Activated T-helper 2 cell treated with anti-CD3 and anti-CD28 coated beads, Interferon-gamma antibody, Interleukin-2, Interleukin-4, amounts not matched to agents 10 μg/mL and 5 μg/mL and 100 μg/mL, durations not matched to agents 14 hours and 24 hours and 36 hours (primary cell): ENCODE measurements at regions of chr2 and their contacts with region 1.

Region 1: GRCh38 chr2:190534310-190535120 is at the start of gene NEMP2:
- DNase-seq: peak; percentile 84
- H3K4me3 Mint-ChIP-seq: peak within 1 kb of the TSS; percentile 95
- H3K27ac Mint-ChIP-seq: peak within 1 kb of the TSS; percentile 98
- H3K4me1 Mint-ChIP-seq: peaks cover 48% of the 10 kb centered on the region
- H3K27me3 Mint-ChIP-seq: no peaks in the 10 kb centered on the region
- total RNA-seq, gene NEMP2: 15.2 and 15.5 TPM in 2 replicates

Region 2: DNA sequence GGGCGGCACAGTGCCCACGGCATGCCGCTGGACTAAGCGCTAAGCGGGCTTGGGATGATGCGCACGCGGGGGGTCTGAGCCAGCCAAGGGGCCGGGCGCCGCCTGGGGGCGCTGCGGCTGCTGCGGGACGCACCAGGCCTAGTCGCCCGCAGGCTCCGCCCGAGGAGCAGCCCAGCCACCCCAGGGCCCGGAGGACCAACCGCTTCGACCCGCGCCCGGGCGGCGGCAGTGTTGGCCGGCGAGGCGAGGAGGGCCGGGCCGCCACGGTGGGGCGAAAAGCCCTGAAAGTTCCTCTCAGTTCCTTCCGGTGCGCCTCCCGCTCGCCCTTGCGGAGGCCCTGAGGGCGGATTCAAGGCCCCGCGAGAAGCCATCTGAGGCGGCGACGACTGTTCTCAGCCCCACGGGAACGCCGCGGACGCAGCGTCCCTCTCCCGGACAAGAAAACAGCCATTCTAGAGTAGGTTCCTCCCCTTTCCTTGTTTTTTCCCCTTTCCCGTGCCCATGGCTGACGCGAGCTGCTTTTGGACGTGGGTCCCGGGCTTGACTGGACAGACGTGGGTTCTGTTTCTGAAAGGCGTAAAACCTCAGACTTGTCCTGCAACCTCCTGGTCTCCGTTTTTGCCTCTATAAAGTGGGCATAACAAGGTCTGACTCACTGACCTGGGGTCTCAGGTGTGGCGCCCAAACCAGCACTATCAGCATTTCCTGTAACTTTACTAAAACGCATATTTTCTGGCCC is 860.0 kb before region 1 on chr2 and contains the start of gene ANKAR:
- intact Hi-C with region 1: loop called (anchors 10 kb)
- DNase-seq: peak; percentile 73
- H3K4me3 Mint-ChIP-seq: peak within 1 kb of the TSS; percentile 88
- H3K27ac Mint-ChIP-seq: peak within 1 kb of the TSS; percentile 95
- H3K4me1 Mint-ChIP-seq: peaks cover 22% of the 10 kb centered on the region
- H3K27me3 Mint-ChIP-seq: no peaks in the 10 kb centered on the region
- total RNA-seq, gene ANKAR: 4.0 and 4.1 TPM in 2 replicates

Region 3: DNA sequence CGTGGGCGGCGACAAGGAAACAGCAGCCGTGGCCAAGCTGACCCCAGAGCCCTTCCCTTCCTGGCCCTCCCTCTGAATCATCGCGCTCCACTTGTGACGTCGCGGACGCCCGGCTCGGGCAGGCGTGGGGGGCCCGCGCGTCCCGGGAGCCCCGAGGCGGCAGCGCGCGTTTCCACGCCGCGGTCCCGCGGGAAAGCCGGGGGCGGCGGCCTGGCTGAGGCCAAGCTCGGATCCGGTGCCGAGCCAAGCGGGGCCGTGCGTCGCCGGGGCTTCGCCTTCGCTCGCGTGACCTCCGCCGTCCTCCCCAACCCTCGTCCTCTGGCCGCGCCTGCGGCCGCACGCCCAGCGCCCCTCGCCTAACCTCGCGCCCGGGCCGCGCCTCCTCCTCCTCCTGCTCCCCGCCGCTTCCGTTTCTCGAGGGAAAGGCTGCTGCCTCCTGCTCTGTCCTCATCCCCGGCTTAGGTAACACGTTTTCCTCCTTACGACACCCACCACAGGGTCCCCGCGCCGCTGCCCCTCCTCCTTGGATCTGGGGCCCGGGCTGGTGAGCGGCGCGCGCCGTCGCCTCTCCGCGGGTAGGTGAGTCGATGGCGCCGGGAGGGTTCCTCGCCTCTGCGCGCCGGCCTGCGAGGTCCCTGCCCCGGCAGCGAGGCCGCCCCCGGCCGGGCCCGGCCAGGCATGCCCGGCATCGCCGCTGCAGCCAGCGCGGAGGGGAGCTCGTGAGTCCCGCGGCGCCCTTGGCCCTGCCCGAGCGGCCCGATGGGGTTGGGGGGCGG is 190.8 kb before region 1 on chr2 and contains the start of gene INPP1:
- intact Hi-C with region 1: loop called (anchors 2 kb)
- DNase-seq: peak; percentile 30
- H3K4me3 Mint-ChIP-seq: peak within 1 kb of the TSS; percentile 88
- H3K27ac Mint-ChIP-seq: peak within 1 kb of the TSS; percentile 88
- H3K4me1 Mint-ChIP-seq: peaks cover 18% of the 10 kb centered on the region
- H3K27me3 Mint-ChIP-seq: peaks cover 6% of the 10 kb centered on the region
- total RNA-seq, gene INPP1: 12.8 and 13.6 TPM in 2 replicates

Region 4: GRCh38 chr2:190519975-190520767 is 14.3 kb before region 1 on chr2:
- intact Hi-C with region 1: loop called (anchors 2 kb)
- DNase-seq: no peak
- H3K4me3 Mint-ChIP-seq: peak overlapping the region; percentile 15
- H3K27ac Mint-ChIP-seq: peak overlapping the region; percentile 78
- H3K4me1 Mint-ChIP-seq: peaks cover 58% of the 10 kb centered on the region
- H3K27me3 Mint-ChIP-seq: no peaks in the 10 kb centered on the region

Region 5: DNA sequence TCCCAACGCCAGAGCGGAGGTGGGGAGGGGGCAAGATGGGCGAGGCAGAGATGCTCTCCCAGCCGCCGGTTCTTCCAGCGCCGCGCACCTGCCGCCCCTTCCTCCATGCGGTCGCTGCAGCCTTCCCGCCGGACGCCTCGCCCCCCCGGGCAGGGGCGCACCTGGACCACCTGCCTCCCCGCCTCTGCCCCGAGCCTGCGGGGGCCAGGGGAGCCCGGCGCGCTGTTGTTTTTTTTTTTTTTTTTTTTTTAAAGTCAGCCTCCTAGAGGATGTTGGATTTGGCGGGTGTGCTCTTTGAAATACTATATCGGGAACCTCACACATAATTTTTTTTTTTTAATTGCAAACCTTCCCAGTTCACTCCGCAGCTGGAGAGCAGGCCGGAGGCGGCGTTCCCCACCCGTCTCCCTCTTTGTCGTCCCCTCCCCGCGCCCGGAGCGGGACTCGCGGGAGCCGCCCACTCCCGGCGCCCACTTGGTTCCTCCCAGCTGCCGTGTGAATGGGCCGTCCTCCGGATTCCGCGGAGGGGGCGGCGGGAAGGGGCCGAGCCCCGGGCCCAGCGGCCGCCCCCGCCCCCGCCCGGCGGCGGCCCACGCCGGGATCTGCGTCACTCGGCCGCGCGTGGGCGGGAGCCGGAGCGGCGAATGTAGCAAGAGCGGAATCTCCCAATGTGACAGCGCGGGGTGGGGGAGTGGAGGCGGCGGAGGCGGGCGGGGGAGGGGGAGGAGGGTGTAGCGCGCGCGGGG is 113.9 kb after region 1 on chr2:
- intact Hi-C with region 1: loop called (anchors 1 kb)
- DNase-seq: peak; percentile 74
- H3K4me3 Mint-ChIP-seq: peak overlapping the region; percentile 73
- H3K27ac Mint-ChIP-seq: peak overlapping the region; percentile 74
- H3K4me1 Mint-ChIP-seq: peaks cover 40% of the 10 kb centered on the region
- H3K27me3 Mint-ChIP-seq: no peaks in the 10 kb centered on the region

Region 6: GRCh38 chr2:190843874-190844699 is 309.6 kb after region 1 on chr2:
- intact Hi-C with region 1: loop called (anchors 1 kb)
- DNase-seq: peak; percentile 17
- H3K4me3 Mint-ChIP-seq: no peak overlapping the region
- H3K27ac Mint-ChIP-seq: peak overlapping the region; percentile 94
- H3K4me1 Mint-ChIP-seq: peaks cover 44% of the 10 kb centered on the region
- H3K27me3 Mint-ChIP-seq: no peaks in the 10 kb centered on the region